Naive thymus-derived CD4-positive, alpha-beta T cell (primary cell): ENCODE measurements at regions of chr1 and their contacts with region 1.

Region 1: DNA sequence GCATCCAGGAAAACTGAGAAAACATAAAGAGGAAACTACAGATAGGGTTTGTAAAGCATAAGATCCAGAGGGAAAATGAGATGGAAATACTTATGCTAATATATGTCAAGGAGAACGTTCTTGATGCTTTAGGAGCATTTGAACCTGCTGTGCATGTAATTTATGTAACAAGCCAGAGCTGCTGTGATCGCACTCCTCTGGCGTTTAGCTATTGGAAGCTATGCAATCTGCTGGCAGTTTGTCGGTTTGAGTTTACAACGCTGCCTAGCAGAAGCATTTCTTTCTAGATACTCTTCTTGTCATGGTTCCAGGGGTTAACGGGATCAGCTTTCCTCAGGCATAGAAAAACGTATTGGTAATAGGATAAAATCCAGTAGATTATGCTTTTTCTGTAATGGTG is 182.7 kb downstream of the KCNH1 start:
- DNase-seq: no peak
- ATAC-seq: no peak
- H3K4me3 ChIP-seq: no peak overlapping the region
- H3K4me3 Mint-ChIP-seq: no peak overlapping the region
- H3K27ac ChIP-seq: no peak overlapping the region
- H3K27ac Mint-ChIP-seq: no peak overlapping the region
- H3K4me1 ChIP-seq: no peaks in the 10 kb centered on the region
- H3K4me1 Mint-ChIP-seq: no peaks in the 10 kb centered on the region
- H3K27me3 ChIP-seq: no peaks in the 10 kb centered on the region
- H3K27me3 Mint-ChIP-seq: peaks cover 0 to 11% (median 6%) of the 10 kb centered on the region in 5 donors

Region 2: GRCh38 chr1:210584439-210585113 is 366.7 kb before region 1 on chr1:
- CTCF ChIA-PET with region 1: no interaction called
- POLR2A ChIA-PET with region 1: no interaction called
- intact Hi-C with region 1: loop called (anchors 2 to 5 kb)
- DNase-seq: peak; percentile 7 to 63 (median 47)
- ATAC-seq: peak; percentile 70
- H3K4me3 ChIP-seq: no peak overlapping the region
- H3K4me3 Mint-ChIP-seq: no peak overlapping the region
- H3K27ac ChIP-seq: no peak overlapping the region
- H3K27ac Mint-ChIP-seq: no peak overlapping the region
- H3K4me1 ChIP-seq: no peaks in the 10 kb centered on the region
- H3K4me1 Mint-ChIP-seq: peaks cover 0 to 8% (median 0%) of the 10 kb centered on the region in 7 donors
- H3K27me3 ChIP-seq: no peaks in the 10 kb centered on the region
- H3K27me3 Mint-ChIP-seq: peaks cover 0 to 6% (median 3%) of the 10 kb centered on the region in 5 donors

Region 3: DNA sequence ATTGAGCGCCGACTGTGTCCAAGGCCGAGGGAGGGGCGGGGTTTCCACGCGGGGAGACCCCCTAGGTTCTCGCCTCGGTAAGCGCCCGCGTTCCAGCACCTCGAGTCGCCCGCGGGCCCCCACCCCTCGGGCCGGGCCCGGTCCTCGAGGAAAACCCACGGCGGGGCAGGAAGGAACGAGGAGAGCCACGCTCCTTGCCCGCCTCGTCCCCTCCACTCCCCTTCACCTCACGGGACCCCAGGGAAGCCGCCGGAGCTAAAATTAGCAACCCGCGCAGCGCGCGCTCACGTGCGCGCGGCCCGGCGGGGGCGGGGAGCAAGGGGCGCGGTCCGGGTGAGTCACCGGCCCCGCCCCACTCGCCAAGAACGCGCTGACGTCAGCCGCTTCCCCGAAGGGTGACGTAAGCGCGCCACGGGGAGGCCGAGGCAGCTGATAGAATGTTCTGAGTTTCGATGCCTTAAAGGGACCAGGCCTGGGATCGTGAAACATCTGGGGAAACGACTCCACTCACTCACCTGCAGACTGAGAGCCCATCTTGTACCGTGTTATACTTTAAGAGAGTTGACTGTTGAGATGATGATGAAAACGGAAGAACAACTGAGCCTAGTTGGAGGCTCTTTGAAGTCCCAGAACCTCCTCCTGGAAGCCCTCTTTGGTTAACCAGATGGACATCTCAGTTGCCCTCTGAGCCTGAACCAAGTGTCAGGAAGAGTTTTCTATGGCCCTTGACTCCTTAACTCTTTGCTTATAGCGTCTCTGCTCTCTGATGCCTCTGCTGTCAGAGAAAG is 1607.6 kb after region 1 on chr1:
- CTCF ChIA-PET with region 1: no interaction called
- POLR2A ChIA-PET with region 1: no interaction called
- intact Hi-C with region 1: no loop called
- DNase-seq: peak; percentile 83 to 93 (median 91)
- ATAC-seq: peak; percentile 97
- H3K4me3 ChIP-seq: peak overlapping the region; percentile 54
- H3K4me3 Mint-ChIP-seq: peak overlapping the region; percentile 82 to 95 (median 90)
- H3K27ac ChIP-seq: peak overlapping the region; percentile 74
- H3K27ac Mint-ChIP-seq: peak overlapping the region; percentile 91 to 99 (median 98)
- H3K4me1 ChIP-seq: peaks cover 7 to 13% of the 10 kb centered on the region in 2 donors
- H3K4me1 Mint-ChIP-seq: peaks cover 6 to 15% (median 9%) of the 10 kb centered on the region in 7 donors
- H3K27me3 ChIP-seq: no peaks in the 10 kb centered on the region
- H3K27me3 Mint-ChIP-seq: peaks cover 0 to 45% (median 0%) of the 10 kb centered on the region in 5 donors